Right ventricle myocardium inferior (tissue), 1 donor: ENCODE measurements at regions of chr10 and their contacts with region 1.

Region 1: DNA sequence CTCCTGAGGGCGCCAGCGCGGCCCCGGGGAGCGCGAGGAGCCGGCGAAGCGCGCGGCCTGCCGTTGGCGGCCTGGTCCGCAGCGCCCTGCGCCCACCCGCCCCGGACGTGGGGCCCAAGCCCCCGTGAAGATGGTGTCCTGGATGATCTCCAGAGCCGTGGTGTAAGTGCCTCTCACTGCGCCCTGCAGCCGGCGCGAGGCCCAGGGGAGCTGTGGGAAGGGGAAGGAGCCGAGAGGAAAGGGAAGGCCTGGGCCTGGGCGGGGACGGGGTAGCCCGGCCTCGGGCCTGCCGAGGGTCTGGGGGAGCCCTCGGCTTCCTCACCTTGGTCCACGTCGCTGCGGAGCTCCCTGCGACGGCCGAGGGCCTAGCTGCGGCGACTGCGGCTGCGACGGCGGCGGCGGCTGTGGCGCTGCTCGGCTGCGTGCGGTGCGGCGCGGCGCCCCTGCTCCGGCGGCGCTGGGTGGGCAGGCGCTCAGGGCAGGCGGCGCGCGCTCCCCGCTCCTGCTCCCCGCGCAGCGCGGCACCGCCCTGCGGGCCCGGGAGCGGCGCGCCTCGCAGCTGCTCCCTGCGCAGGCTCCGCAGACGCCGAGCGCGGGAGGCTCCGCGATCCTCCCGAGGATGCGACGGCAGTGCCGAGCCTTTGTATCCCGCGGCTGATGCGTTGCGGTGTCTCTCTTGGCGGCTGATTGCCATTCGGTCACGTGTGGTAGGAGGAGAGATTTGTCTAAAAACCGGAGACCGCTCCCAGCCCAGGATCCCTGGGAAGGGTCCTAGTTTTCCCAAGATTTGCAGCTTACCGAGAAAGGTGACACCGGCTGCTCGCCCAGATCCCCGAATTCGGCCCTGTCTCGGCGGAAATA is 445 bp downstream of the REEP3 start:
- DNase-seq: peak; percentile 91
- ATAC-seq: peak; percentile 88

Region 2: GRCh38 chr10:63206997-63207811 is 314.4 kb before region 1 on chr10:
- intact Hi-C with region 1: loop called (anchors 5 kb)
- DNase-seq: no peak
- ATAC-seq: peak; percentile 83

Region 3: GRCh38 chr10:63268798-63269503 is 252.7 kb before region 1 on chr10:
- intact Hi-C with region 1: loop called (anchors 5 kb)
- DNase-seq: peak; percentile 79
- ATAC-seq: peak; percentile 98

Region 4: GRCh38 chr10:63409465-63410027 is 112.1 kb before region 1 on chr10:
- intact Hi-C with region 1: loop called (anchors 5 kb)
- DNase-seq: no peak
- ATAC-seq: no peak

Region 5: DNA sequence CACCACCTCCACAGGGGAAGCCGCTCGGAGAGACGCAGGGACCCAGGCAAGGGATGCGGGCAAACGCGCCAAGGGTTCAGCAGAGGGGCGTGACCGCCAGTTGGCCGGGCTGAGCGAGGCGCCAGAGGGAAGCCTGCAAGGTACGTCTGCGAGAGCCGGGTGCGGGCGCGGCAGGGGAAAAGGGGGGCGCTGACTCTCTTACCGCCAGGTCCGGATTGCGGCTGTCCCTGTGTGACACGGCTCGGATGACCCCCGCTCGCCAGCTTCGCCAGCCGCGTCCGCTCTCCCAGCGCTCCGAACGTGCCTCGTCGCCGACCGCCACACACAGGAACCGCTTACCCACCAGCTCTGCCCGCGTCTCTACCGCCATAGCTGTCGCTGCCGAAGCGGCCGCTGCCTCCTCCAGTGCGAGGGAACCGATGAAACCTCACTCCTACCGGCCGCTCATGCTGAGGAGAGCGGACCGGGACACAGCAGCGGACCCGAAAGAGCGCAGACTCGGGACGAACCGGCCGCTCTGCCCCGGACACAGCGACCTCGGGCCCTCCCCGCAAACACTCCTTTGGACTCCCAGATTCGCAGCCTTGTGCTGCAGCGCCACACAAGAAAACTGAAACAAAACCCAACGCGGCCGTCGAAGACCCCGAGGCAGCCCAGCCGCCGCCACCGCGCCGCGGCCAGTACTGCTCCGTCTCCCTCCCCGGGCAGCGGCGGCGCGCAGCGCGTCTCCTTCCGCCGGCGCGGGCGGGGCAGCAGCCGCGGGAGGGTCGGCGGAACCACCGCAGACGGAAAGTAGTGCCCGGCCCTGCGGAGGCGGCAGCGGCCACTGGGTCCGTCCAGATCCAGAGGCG is 56.1 kb before region 1 on chr10 and contains the start of gene JMJD1C:
- intact Hi-C with region 1: loop called (anchors 5 kb)
- DNase-seq: peak; percentile 91
- ATAC-seq: peak; percentile 93
- total RNA-seq, gene JMJD1C: 38.1 TPM